Right ventricle myocardium inferior (tissue), 1 donor: ENCODE measurements at regions of chr16 and their contacts with region 1.

Region 1: DNA sequence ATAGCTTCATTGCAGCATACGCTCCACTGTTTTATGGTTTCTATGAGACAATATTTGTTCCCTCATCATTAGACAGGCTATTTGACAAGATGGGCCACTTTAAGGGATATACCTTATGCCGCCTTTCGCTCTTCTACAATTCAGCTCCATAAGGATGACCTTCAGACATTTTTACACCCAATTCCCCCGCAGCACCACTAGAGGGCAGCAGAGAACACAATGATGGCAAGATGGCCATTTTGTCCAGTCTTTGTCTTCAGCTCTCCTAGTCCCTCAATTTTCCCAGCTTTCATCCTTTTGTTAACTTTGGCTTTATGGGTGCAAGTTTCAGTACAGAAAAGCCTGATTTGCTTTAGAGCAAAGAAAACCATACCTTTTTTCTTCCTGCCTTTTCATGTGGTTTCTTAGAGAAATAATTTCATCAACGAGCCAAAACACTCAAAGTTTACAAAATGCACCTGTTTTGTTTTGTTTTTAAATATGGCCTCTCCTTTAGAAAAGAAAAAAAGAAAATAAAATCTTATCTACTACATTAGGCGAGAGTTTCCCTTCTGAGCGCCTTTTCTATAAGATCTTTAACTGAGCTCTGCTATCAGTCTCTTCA is 355.3 kb downstream of the TOX3 start:
- DNase-seq: no peak
- ATAC-seq: no peak

Region 2: GRCh38 chr16:52912565-52913173 is 721.0 kb after region 1 on chr16:
- intact Hi-C with region 1: loop called (anchors 2 kb)
- DNase-seq: no peak
- ATAC-seq: peak; percentile 46

Region 3: GRCh38 chr16:53022374-53022773 is 830.7 kb after region 1 on chr16:
- intact Hi-C with region 1: loop called (anchors 2 kb)
- DNase-seq: no peak
- ATAC-seq: peak; percentile 69